Mammary epithelial cell (primary cell): ENCODE measurements at regions of chr16 and their contacts with region 1.

Region 1: DNA sequence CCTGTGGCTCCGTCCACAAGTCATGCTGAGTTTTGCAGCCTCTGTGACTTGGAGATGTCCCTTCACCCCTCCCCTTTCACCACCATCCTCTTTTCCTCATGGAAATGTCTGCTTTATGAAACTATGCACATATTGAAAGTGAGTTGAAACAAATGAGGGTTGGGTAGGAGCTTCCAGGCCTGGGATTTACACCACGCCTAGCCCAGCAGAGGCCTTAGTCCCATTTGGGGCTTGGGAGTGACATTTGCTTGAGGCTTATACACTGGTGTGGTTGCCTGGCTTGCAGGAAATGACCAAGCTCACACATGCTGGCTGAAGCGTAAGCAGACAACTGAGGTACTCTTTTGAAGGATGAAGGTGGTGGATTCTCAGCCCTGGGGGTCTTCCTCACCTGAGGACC is 10.5 kb upstream of the SPNS1 start:
- DNase-seq: no peak
- H3K4me3 ChIP-seq: no peak overlapping the region
- H3K27ac ChIP-seq: no peak overlapping the region
- H3K4me1 ChIP-seq: no peaks in the 10 kb centered on the region
- H3K27me3 ChIP-seq: no peaks in the 10 kb centered on the region
- CTCF ChIP-seq: no peak

Region 2: DNA sequence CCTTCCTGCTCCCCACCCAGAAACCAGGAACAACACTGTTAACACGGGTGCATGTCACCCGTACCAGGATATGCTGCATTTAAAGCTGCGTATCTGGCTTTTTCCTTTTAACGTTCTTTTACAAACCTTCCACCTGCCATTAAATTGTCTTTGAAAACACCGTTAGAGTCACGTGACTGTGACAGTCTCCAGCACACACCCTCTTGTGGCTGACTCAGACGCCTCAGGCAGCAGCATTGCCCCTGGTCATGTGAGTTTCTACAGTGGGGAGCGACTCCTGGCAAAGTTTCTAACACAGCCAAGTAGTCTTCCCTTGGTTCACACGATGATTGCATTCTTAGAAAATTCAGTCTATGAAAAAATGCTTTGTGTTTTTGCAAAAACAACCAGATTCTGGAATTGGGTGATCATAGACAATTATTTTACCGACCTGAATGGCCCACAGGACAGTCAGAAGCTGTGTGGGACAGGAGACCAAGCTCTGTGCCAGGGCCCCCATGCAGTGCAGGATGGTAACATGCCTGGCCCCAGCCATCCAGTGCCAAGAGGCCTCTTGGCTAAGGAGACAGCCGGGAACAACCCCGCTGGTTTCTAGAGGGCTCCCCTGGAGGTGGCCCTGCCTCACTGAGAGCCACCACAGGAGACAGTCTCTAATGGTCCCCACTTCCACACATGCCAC is 1215.1 kb before region 1 on chr16:
- CTCF ChIA-PET with region 1: no interaction called
- dilution Hi-C with region 1: no loop called
- in situ Hi-C with region 1: no loop called
- intact Hi-C with region 1: no loop called
- DNase-seq: peak; percentile 71
- H3K4me3 ChIP-seq: no peak overlapping the region
- H3K27ac ChIP-seq: no peak overlapping the region
- H3K4me1 ChIP-seq: no peaks in the 10 kb centered on the region
- H3K27me3 ChIP-seq: no peaks in the 10 kb centered on the region
- CTCF ChIP-seq: no peak

Region 3: GRCh38 chr16:28538733-28539596 is 425.1 kb before region 1 on chr16 and contains the start of gene NUPR1:
- CTCF ChIA-PET with region 1: no interaction called
- dilution Hi-C with region 1: loop called (anchors 5 kb)
- in situ Hi-C with region 1: no loop called
- intact Hi-C with region 1: no loop called
- DNase-seq: peak; percentile 87
- H3K4me3 ChIP-seq: peak within 1 kb of the TSS; percentile 60 to 77 (median 60)
- H3K27ac ChIP-seq: peak within 1 kb of the TSS; percentile 65
- H3K4me1 ChIP-seq: peaks cover 18% of the 10 kb centered on the region
- H3K27me3 ChIP-seq: no peaks in the 10 kb centered on the region
- CTCF ChIP-seq: no peak
- total RNA-seq, gene NUPR1: 55.0 to 160 TPM

Region 4: DNA sequence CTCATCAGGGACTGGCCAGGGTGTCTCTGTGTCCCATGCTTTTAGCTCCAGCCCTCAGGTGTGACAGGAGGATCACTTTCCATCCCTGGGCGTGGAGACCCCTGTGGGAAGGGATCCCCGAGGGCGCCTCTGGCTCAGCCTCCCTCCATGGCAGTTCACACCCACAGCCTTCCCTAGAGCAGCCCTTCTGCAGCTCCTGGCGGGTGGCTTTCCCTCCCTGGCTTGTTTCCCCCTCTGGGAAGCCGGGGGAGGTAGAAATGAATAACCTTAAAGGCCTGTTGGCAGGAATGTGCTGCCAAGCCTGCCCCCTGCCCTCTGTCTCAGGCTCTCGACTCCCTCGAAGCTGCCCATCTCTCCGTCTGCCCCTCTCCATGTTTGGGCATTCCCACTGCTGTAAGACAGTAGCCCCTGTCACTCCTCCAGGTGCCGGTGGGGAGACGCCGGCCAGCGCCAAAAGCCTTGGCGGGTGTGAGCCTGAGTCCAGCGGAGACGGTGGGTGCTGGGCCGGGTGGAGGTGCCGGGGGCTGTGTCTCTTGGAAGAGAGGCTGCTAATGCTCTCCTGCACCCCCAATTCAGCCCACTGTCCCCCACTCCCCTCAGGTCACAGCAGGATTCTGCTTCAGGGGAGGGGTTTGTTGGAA is 87.9 kb before region 1 on chr16:
- CTCF ChIA-PET with region 1: no interaction called
- dilution Hi-C with region 1: no loop called
- in situ Hi-C with region 1: no loop called
- intact Hi-C with region 1: no loop called
- DNase-seq: no peak
- H3K4me3 ChIP-seq: no peak overlapping the region
- H3K27ac ChIP-seq: no peak overlapping the region
- H3K4me1 ChIP-seq: peaks cover 11% of the 10 kb centered on the region
- H3K27me3 ChIP-seq: no peaks in the 10 kb centered on the region
- CTCF ChIP-seq: no peak

Region 5: GRCh38 chr16:28886945-28887344 is 77.1 kb before region 1 on chr16:
- CTCF ChIA-PET with region 1: no interaction called
- dilution Hi-C with region 1: loop called (anchors 5 kb)
- in situ Hi-C with region 1: no loop called
- intact Hi-C with region 1: no loop called
- DNase-seq: no peak
- H3K4me3 ChIP-seq: no peak overlapping the region
- H3K27ac ChIP-seq: no peak overlapping the region
- H3K4me1 ChIP-seq: no peaks in the 10 kb centered on the region
- H3K27me3 ChIP-seq: no peaks in the 10 kb centered on the region
- CTCF ChIP-seq: no peak

Region 6: DNA sequence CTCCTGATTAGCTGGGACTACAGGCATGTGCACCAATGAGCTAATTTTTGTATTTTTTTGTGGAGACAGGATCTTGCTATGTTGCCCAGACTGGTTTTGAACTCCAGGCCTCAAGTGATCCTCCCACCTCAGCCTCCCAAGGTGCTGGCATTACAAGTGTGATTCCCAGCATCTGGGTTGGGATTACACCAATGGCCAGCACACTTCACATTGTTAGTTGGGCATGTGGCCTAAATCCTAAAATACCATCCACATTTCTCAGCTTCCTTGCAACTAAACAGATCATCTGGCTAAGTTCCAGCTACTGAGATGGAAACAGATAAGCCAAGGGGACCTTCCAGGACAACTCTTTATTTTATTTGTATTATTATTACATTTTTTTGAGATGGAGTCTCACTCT is 48.9 kb before region 1 on chr16:
- CTCF ChIA-PET with region 1: no interaction called
- dilution Hi-C with region 1: loop called (anchors 5 kb)
- in situ Hi-C with region 1: no loop called
- intact Hi-C with region 1: no loop called
- DNase-seq: no peak
- H3K4me3 ChIP-seq: no peak overlapping the region
- H3K27ac ChIP-seq: no peak overlapping the region
- H3K4me1 ChIP-seq: peaks cover 4% of the 10 kb centered on the region
- H3K27me3 ChIP-seq: no peaks in the 10 kb centered on the region
- CTCF ChIP-seq: no peak

Region 7: DNA sequence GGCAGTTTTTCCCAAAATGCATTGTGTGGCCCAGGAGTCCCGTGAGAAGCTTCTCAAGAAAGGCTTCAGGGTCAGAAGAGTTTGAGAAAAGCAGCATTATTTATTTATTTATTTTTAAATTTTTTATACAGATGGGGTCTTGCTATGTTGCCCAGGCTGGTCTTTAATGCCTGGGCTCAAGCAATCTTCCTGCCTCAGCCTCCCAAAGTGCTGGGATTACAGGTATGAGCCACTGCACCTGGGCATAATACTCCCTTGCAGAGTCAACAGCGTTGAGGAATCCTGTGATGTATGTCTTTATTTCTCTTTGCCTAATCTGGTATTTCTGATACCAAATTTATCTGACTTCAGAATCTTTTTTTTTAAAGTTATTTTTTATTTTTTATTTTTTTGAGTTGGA is 35.9 kb after region 1 on chr16:
- CTCF ChIA-PET with region 1: no interaction called
- dilution Hi-C with region 1: loop called (anchors 5 kb)
- in situ Hi-C with region 1: no loop called
- intact Hi-C with region 1: no loop called
- DNase-seq: no peak
- H3K4me3 ChIP-seq: no peak overlapping the region
- H3K27ac ChIP-seq: no peak overlapping the region
- H3K4me1 ChIP-seq: no peaks in the 10 kb centered on the region
- H3K27me3 ChIP-seq: no peaks in the 10 kb centered on the region
- CTCF ChIP-seq: no peak